PC-9 (cell line): ENCODE measurements at regions of chr3 and their contacts with region 1.

Region 1: DNA sequence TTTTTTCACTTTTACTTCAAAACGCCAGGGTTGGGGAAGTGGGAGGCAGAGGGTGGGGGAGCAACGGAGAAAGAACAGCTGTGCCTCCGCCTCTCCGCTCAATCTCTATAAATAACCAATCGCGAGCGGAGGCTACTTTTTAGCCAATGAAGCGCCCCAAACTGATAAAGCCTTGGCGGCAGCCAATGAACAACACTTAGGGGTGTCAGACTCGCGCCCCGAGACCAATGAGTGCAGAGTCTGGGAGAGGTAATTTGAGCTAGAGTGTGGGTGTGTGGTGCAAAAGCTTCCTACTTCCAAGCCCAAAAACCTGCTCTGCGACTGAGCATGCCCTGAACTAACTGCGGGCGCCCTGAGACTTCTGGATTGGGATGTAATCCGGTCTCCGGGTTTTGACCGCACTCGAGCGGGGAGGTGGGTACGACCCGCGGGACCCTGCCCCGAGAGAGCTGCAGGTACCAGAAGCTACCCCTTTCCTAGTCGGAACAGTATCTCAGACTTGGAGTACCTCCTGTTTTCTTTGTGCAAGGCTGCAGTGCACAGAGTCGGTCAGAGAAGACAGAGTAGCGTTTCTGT is 800 bp upstream of the RAP2B start:
- DNase-seq: peak; percentile 97 to 99
- H3K4me3 ChIP-seq: peak overlapping the region; percentile 97
- H3K27ac ChIP-seq: peak overlapping the region; percentile 93
- H3K4me1 ChIP-seq: peaks cover 42% of the 10 kb centered on the region
- H3K27me3 ChIP-seq: no peaks in the 10 kb centered on the region
- CTCF ChIP-seq: no peak

Region 2: GRCh38 chr3:153052096-153052460 is 109.1 kb before region 1 on chr3:
- CTCF ChIA-PET with region 1: interaction called, 6 read pairs
- POLR2A ChIA-PET with region 1: interaction called, 19 read pairs
- intact Hi-C with region 1: loop called (anchors 1 kb)
- DNase-seq: peak; percentile 77 to 100
- H3K4me3 ChIP-seq: peak overlapping the region; percentile 48; the same call in 1 of the 2 replicates
- H3K27ac ChIP-seq: peak overlapping the region; percentile 98
- H3K4me1 ChIP-seq: peaks cover 45% of the 10 kb centered on the region
- H3K27me3 ChIP-seq: no peaks in the 10 kb centered on the region
- CTCF ChIP-seq: no peak

Region 3: GRCh38 chr3:153221748-153222162 is 60.5 kb after region 1 on chr3:
- CTCF ChIA-PET with region 1: no interaction called
- POLR2A ChIA-PET with region 1: interaction called, 6 read pairs
- intact Hi-C with region 1: loop called (anchors 1 kb)
- DNase-seq: peak; percentile 72 to 92
- H3K4me3 ChIP-seq: no peak overlapping the region
- H3K27ac ChIP-seq: peak overlapping the region; percentile 59
- H3K4me1 ChIP-seq: peaks cover 19% of the 10 kb centered on the region
- H3K27me3 ChIP-seq: no peaks in the 10 kb centered on the region
- CTCF ChIP-seq: no peak

Region 4: DNA sequence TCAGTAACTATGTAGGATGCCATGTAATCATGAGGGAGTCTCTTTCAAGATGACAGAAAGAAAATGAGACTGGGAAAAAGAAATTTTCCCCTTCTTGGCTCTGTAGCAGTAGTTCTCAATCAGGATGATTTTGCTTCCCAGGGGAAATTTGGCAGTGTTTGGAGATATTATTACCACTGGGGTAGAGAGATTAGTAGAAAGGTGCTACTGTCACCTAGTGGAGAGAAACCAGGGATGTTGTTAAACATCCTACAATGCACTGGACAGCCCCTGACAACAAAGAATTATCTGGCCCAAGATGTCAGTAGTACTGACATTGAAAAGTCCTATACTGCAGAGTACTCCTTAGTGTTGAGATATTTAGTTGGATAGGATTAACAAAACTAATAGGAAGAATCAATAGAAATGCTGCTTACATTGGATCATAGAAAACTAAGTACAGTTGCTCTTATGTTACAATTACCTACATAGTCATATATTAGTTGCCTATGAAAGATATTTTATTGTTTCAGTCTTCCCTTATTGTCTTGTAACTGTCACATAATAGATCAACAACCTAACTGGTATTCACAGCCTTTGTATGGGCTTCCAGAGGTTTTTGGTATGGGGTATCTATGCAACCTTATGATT is 434.1 kb after region 1 on chr3:
- CTCF ChIA-PET with region 1: no interaction called
- POLR2A ChIA-PET with region 1: interaction called, 3 read pairs
- intact Hi-C with region 1: loop called (anchors 2 kb)
- DNase-seq: no peak
- H3K4me3 ChIP-seq: no peak overlapping the region
- H3K27ac ChIP-seq: no peak overlapping the region
- H3K4me1 ChIP-seq: peaks cover 16% of the 10 kb centered on the region
- H3K27me3 ChIP-seq: no peaks in the 10 kb centered on the region
- CTCF ChIP-seq: peak; percentile 83

Region 5: GRCh38 chr3:153927107-153927506 is 765.9 kb after region 1 on chr3:
- CTCF ChIA-PET with region 1: no interaction called
- POLR2A ChIA-PET with region 1: no interaction called
- intact Hi-C with region 1: loop called (anchors 2 kb)
- DNase-seq: no peak
- H3K4me3 ChIP-seq: no peak overlapping the region
- H3K27ac ChIP-seq: no peak overlapping the region
- H3K4me1 ChIP-seq: no peaks in the 10 kb centered on the region
- H3K27me3 ChIP-seq: no peaks in the 10 kb centered on the region
- CTCF ChIP-seq: peak; percentile 60